Naive thymus-derived CD8-positive, alpha-beta T cell (primary cell): ENCODE measurements at regions of chr6 and their contacts with region 1.

Region 1: DNA sequence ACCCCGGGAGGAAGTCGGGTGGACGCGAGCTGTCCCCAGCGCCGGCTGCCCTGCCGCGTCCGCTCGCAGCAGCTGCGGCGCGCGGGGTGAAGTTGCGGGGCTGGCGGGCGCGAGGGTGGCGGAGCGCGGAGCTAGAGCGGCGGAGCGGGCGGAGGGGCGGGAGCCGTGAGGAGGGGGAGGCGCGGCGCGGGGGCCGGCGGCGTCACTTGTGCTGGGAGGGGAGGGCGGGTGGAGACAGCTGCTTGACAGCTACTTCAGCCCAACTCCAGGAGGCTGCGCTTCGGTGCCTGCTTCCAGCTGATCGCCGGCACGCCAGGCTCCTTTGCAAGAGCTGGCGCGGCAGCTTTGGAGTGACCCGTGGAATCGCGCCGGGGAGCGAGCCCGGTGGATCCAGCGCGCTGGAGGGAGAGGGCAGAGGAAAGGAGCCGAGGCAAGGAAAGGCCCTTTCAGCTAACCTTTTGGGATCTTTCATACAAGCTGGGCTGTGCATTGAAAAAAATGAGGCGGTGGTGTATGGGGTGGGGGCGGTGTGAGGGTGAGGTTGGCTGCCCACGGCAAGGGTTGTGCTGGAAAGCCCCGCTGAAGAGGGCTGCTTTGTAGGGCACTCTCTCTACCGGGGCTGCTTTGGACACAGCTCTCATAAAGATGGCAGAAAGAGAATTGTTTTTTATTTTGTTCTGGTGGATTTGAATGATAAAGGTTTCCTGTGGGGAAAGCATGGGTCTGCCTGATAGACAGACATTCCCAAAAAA is 24.6 kb downstream of the RIPOR2 start:
- DNase-seq: peak in 5 of 10 donors; percentile 39 to 70 (median 56)
- ATAC-seq: peak; percentile 39 to 45
- H3K4me3 Mint-ChIP-seq: peak overlapping the region; percentile 81 to 99 (median 94)
- H3K27ac Mint-ChIP-seq: peak overlapping the region; percentile 96 to 99 (median 98)
- H3K4me1 Mint-ChIP-seq: peaks cover 75 to 100% (median 98%) of the 10 kb centered on the region in 4 donors
- H3K27me3 Mint-ChIP-seq: no peaks in the 10 kb centered on the region

Region 2: DNA sequence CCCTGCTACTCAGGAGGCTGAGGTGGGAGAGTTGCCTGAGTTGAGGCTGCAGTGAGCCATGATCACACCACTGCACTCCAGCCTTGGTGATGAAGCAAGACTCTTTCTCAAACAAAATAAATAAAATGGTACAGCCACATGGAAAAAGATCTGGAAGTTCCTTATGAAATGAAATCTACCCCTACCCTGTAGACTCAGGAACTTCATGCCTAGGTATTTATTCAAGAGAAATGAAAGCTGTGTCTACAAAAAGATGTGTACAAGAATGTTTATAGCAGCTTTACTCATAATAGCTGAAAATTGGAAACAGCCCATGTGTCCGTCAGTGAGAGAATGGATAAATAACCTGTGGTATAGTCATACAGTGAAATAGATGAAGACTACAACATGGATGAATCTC is 177.0 kb before region 1 on chr6:
- POLR2A ChIA-PET with region 1: no interaction called
- DNase-seq: no peak
- ATAC-seq: no peak
- H3K4me3 Mint-ChIP-seq: no peak overlapping the region
- H3K27ac Mint-ChIP-seq: peak overlapping the region in 1 of 10 donors; percentile 1
- H3K4me1 Mint-ChIP-seq: peaks cover 0 to 7% (median 0%) of the 10 kb centered on the region in 4 donors
- H3K27me3 Mint-ChIP-seq: peaks cover 0 to 4% (median 0%) of the 10 kb centered on the region in 5 donors

Region 3: DNA sequence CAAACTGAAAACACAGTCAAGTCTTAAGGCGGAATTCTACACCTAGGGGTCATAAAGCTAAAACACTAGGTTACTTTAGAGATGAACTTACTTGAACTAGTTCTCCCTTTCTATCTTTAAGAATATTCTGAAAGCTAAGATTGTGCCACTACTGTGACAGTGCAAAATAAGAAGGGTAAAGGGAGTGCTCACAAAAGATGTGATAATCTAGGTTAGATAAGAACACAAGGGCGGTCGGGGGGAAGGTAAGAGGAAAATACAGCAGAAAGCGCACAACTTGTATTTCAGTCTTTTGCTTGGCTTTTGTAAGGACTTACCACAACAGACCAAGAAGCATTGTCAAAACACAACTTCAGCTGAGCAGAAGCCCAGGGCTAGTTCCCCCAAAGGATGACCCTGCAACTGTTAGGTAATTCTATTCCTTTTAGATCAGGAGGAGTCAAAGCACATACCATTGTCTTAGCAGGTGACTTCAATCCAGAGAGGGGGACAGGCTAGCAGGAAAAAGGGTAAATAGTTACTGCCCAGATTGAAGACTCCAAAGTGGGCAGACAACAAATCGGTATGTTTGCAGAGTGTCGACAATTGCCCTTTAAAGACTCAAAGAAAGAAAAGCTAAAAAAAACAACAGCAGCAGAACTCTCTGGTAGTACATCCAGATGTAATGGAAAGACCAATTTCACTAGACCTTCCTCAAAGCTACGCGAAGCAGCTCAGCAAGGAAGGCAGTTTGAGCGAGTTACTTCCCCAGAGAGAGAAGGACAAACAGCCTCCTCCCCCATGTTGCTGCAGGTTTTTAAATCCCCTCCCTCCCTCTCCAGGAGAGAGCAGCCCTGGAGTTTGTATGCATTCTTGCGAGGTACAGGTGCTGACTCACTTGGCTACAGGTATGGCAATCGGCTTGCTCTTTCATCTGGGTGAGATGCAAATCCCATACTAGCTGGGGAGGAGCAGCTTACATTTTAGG is 34.4 kb before region 1 on chr6:
- POLR2A ChIA-PET with region 1: interaction called, 10 read pairs
- DNase-seq: no peak
- ATAC-seq: peak in 1 of 2 donors; percentile 9
- H3K4me3 Mint-ChIP-seq: peak overlapping the region in 8 of 10 donors; percentile 16 to 70 (median 38)
- H3K27ac Mint-ChIP-seq: peak overlapping the region; percentile 49 to 96 (median 86)
- H3K4me1 Mint-ChIP-seq: peaks cover 29 to 91% (median 82%) of the 10 kb centered on the region in 4 donors
- H3K27me3 Mint-ChIP-seq: no peaks in the 10 kb centered on the region

Region 4: DNA sequence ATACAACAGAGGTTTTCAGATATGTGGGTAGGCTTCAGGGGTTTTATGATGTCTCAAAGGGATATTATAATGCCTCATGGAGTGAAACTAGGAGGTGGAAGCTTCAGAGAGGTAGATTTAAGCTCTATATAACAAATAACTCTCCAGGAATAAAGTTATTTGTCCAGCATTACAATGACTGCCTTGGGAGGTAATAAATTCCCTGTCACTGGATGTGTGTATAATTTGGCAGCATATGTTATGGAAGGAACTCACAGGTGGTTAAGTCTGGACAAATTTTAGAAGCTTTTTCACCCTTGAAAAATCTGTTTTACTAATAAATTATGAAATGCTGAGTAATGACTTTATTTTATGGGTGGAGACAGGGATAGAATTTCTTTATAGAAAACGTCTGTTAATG is 61.4 kb after region 1 on chr6:
- POLR2A ChIA-PET with region 1: no interaction called
- DNase-seq: no peak
- ATAC-seq: no peak
- H3K4me3 Mint-ChIP-seq: no peak overlapping the region
- H3K27ac Mint-ChIP-seq: peak overlapping the region in 3 of 10 donors; percentile 20 to 72 (median 66)
- H3K4me1 Mint-ChIP-seq: peaks cover 25 to 75% (median 65%) of the 10 kb centered on the region in 4 donors
- H3K27me3 Mint-ChIP-seq: no peaks in the 10 kb centered on the region